ENCODE measurements at regions of chr10 and their contacts with region 1.

Region 1: GRCh38 chr10:120942806-120943413 is 91.7 kb downstream of the WDR11 start:
- DNase-seq: peak; percentile 65
- H3K4me3 Mint-ChIP-seq: no peak overlapping the region
- H3K27ac Mint-ChIP-seq: peak overlapping the region; percentile 7
- H3K4me1 Mint-ChIP-seq: peaks cover 7% of the 10 kb centered on the region
- H3K27me3 Mint-ChIP-seq: peaks cover 3% of the 10 kb centered on the region

Region 2: DNA sequence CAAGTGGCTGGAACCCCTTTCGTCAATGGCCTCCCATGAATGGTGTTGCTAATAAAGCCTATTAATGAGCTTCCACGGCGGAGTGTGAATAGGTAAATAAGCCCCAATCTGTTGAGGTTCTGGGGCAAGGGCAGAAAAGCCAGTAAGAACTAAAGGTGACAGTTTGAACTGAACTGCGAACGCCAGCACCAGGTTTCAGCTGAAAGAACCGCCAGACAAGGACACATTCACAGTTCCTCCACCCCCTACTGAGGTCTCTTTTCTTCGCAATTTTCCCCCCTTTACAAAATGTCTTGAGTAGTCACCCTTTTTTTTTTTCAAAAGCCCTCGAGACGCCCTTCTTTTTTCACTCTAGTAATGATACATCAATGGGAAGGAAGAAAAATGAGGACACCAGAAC is 657.7 kb after region 1 on chr10:
- intact Hi-C with region 1: loop called (anchors 2 kb)
- DNase-seq: no peak
- H3K4me3 Mint-ChIP-seq: no peak overlapping the region
- H3K27ac Mint-ChIP-seq: no peak overlapping the region
- H3K4me1 Mint-ChIP-seq: no peaks in the 10 kb centered on the region
- H3K27me3 Mint-ChIP-seq: peaks cover 42% of the 10 kb centered on the region

Region 3: GRCh38 chr10:121886997-121887622 is 944.2 kb after region 1 on chr10:
- intact Hi-C with region 1: loop called (anchors 5 kb)
- DNase-seq: peak; percentile 12
- H3K4me3 Mint-ChIP-seq: no peak overlapping the region
- H3K27ac Mint-ChIP-seq: no peak overlapping the region
- H3K4me1 Mint-ChIP-seq: peaks cover 4% of the 10 kb centered on the region
- H3K27me3 Mint-ChIP-seq: no peaks in the 10 kb centered on the region

Region 4: DNA sequence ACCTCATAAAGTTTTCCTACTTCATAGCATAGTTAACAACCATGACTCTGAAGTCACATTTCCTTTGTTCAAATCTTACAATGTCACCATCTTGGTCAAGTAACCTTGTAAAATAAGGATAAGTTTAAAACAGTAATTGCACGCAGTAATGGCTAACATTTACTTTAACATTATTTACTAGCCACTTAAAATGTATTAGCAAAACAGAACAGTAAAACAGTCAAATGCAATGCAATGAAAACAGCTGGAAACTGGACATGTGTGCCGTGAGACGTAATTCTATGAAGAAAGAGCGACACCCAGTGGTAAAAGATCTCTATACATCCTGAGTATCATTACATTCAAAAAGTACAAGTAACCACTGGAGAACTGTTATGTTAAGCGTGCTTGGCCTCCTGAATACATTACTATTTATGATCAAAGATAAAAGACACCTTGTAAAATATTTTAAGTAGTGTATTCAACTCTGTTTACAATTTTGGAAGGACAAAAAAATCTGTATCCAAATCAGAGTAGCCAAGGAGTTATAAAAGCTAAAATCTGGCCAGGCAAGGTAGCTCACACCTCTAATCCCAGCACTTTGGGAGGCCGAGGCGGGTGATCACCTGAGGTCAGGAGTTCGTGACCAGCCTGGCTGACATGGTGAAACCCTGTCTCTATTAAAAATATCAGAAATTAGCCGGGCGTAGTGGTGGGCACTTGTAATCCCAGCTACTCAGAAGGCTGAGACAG is 957.7 kb after region 1 on chr10:
- intact Hi-C with region 1: loop called (anchors 5 kb)
- DNase-seq: no peak
- H3K4me3 Mint-ChIP-seq: no peak overlapping the region
- H3K27ac Mint-ChIP-seq: no peak overlapping the region
- H3K4me1 Mint-ChIP-seq: no peaks in the 10 kb centered on the region
- H3K27me3 Mint-ChIP-seq: no peaks in the 10 kb centered on the region